ENCODE measurements at regions of chr9 and their contacts with region 1.

Region 1: GRCh38 chr9:124899845-124900244 is 37.9 kb downstream of the ARPC5L start:
- DNase-seq: peak; percentile 46 to 87 (median 62)
- ATAC-seq: peak; percentile 90
- H3K4me3 ChIP-seq: no peak overlapping the region
- H3K27ac ChIP-seq: peak overlapping the region; percentile 2; the same call in 2 of the 3 replicates
- H3K4me1 ChIP-seq: peaks cover 14 to 17% of the 10 kb centered on the region in 2 experiments; a peak in 4 of 5 replicates
- H3K27me3 ChIP-seq: no peaks in the 10 kb centered on the region
- CTCF ChIP-seq: no peak
- EP300 ChIP-seq: peak; percentile 45
- POLR2A ChIP-seq: no peak
- RAD21 ChIP-seq: peak in 1 of 2 experiments; percentile 13; a peak in 1 of 4 replicates

Region 2: DNA sequence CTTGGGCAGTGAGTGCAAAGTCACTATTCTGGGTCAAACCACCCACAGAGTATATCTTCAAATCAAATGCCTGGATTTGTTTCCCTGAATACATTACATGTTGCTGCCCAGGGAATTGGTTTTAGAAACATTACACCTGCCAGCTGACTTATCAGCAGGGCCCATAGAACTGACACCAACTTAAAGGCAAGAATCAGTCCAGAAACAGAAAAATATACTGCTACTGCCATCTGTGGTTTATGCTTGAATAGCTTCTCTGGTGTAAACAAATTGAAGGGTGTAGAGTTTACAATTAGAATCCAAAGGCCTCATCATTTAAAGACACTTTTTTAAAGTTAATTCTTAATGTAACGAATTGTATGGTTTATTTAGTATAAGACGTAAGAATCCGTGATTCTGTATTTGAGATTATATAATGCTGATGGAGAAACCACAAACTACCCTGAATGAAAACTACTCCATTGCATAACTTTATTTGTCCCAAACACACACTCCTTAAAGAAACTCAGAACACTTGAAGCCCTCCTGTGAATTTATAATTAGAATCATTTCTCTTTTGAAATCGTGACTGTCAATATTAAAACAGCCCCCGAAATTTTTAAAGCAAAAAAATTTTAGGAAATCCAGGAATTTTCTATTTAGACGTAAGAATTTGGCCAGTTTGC is 134.9 kb before region 1 on chr9:
- CTCF ChIA-PET with region 1: no interaction called
- POLR2A ChIA-PET with region 1: no interaction called
- in situ Hi-C with region 1: no loop called
- intact Hi-C with region 1: no loop called
- DNase-seq: peak in 3 of 4 experiments; percentile 25 to 55 (median 51)
- ATAC-seq: peak; percentile 69
- H3K4me3 ChIP-seq: no peak overlapping the region
- H3K27ac ChIP-seq: no peak overlapping the region
- H3K4me1 ChIP-seq: peaks cover 2 to 31% of the 10 kb centered on the region in 2 experiments
- H3K27me3 ChIP-seq: no peaks in the 10 kb centered on the region
- CTCF ChIP-seq: peak; percentile 42 to 72 (median 59); a peak in 5 of 6 replicates
- EP300 ChIP-seq: no peak
- POLR2A ChIP-seq: no peak
- RAD21 ChIP-seq: peak; percentile 41 to 70

Region 3: DNA sequence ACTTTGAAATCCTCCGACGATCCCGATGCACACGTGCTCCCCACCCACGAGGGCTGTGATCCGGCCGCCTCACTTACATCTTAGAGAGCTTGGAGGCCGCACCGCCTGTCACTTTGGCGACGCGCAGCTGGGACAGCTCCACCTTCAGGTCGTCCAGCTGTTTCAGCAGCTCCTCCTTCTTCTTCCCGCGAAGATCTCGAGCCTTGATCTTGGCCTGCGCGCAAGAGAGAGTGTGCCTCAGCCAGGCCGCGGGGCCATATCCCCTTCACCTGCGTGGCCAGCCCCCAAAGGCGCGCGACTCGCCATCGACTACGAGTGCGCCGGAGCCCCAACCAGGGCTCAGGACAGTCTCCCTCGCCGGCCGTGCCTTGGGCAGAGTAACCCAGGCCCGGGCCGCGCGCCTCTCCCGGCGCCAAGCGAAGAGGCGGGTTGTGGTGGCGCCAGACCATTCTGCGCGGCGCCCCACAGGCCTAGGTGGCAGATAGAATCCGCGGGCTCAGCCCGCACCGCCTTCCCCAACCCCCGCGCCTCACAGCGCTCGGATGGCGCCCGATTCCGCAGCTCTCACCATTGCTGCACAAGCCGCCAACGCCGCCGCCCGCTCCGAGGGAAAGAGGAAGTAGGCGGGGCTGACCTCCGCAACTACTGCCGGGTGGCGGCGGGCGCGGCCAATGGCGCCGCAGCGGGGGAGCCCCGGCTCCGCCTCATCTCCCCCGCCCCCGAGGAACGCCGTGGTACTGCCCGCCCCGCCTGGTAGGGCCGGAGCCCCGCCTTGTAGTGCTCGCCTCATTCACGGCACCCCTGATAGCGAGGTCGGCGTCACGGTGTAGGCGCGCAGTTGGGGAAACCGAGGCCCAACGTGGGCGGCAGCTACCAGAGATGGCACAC is 38.3 kb before region 1 on chr9 and contains the starts of genes ARPC5L and RPL35:
- CTCF ChIA-PET with region 1: no interaction called
- POLR2A ChIA-PET with region 1: interaction called, 13 read pairs
- in situ Hi-C with region 1: no loop called
- intact Hi-C with region 1: no loop called
- DNase-seq: peak; percentile 95 to 99 (median 96)
- ATAC-seq: peak; percentile 90
- H3K4me3 ChIP-seq: peak within 1 kb of the TSS; percentile 99
- H3K27ac ChIP-seq: peak within 1 kb of the TSS; percentile 94
- H3K4me1 ChIP-seq: peaks cover 23 to 42% of the 10 kb centered on the region in 2 experiments
- H3K27me3 ChIP-seq: no peaks in the 10 kb centered on the region
- CTCF ChIP-seq: peak; percentile 15 to 55 (median 33); a peak in 4 of 6 replicates
- EP300 ChIP-seq: no peak; the same call in 1 of the 2 replicates
- POLR2A ChIP-seq: peak; percentile 97
- RAD21 ChIP-seq: no peak
- polyA plus RNA-seq, gene ARPC5L: 25.4 to 26.3 TPM
- polyA plus RNA-seq, gene RPL35: 4,709 to 5,101 TPM

Region 4: GRCh38 chr9:124975131-124975530 is 75.3 kb after region 1 on chr9:
- CTCF ChIA-PET with region 1: no interaction called
- POLR2A ChIA-PET with region 1: no interaction called
- in situ Hi-C with region 1: no loop called
- intact Hi-C with region 1: no loop called
- DNase-seq: no peak
- ATAC-seq: no peak
- H3K4me3 ChIP-seq: no peak overlapping the region
- H3K27ac ChIP-seq: no peak overlapping the region
- H3K4me1 ChIP-seq: no peaks in the 10 kb centered on the region; a peak in 1 of 5 replicates
- H3K27me3 ChIP-seq: no peaks in the 10 kb centered on the region
- CTCF ChIP-seq: no peak
- EP300 ChIP-seq: no peak
- POLR2A ChIP-seq: no peak
- RAD21 ChIP-seq: no peak

Region 5: DNA sequence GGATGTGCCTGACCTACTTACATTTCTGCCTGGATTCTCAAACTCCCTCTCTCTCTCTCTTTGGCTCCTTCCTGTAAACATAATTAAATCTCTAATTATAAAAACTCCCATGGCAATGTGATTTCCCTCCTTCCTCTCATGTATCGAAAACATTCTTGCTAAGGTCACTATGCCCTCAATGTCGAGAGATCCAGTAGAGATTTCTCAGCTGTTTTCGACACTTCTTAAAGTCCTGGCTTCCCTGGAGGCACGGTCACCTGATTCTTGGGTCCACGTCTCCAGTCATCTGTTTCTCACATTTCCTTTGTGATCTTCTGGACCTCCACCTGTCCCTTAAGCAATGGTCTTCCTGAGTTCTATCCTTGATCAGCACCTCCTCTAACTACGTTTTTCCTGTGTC is 551.2 kb after region 1 on chr9:
- CTCF ChIA-PET with region 1: no interaction called
- POLR2A ChIA-PET with region 1: no interaction called
- in situ Hi-C with region 1: no loop called
- intact Hi-C with region 1: no loop called
- DNase-seq: no peak
- ATAC-seq: no peak
- H3K4me3 ChIP-seq: no peak overlapping the region
- H3K27ac ChIP-seq: no peak overlapping the region
- H3K4me1 ChIP-seq: no peaks in the 10 kb centered on the region; a peak in 1 of 5 replicates
- H3K27me3 ChIP-seq: no peaks in the 10 kb centered on the region
- CTCF ChIP-seq: no peak
- EP300 ChIP-seq: no peak
- POLR2A ChIP-seq: no peak
- RAD21 ChIP-seq: no peak

Measured in K562 (cell line).